Uterus (tissue), 4 donors: ENCODE measurements at regions of chr19 and their contacts with region 1.

Region 1: DNA sequence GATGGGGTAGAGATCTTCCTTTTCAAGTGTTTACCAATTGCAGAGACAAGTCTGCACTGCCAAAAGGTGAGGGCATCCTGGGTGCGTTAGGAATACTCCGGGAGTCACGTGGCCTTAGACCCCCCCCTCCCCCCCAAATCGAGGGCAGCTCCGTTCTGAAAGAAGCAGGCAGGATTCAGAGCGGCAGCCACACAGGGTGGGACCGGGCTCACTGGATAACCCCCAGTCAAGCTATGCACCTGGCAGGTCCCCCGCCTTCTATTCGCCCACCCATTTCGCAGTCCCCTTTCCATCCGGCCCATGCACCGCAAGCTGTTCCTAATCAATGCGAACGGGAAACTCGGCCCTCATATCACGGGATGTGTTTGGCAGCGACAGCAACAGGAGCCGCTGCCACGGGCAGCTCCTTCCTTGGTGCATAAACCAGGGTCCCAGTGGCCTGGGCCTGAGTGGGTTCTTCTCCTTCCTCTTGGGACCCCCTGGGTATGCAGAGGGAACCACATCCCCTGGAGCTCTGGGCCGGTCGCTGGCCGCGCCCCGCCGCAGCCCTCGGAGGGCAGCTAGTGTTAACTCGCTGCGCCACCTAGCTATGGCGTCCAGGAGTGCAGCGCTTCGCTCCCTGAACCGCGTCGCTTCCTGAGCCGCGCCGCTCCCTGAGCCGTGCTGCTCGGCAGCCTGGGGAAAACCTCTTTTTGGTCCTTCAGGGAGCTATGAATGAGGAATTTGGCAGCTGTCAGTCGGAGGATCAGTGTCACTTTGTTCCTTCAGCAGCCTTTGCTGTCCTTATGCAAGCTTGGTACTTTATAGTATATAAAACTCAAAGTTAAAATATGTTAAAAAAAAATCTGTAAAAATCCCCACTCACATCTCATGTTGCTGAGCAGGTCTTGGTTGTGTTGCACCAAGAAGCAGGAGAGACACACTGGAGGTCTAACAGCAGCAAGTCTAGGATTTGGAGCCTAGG is 41.4 kb downstream of the LYL1 start:
- DNase-seq: peak; percentile 83 to 89
- H3K4me3 ChIP-seq: peak overlapping the region; percentile 33 to 35
- H3K27ac ChIP-seq: peak overlapping the region; percentile 98 to 100
- H3K4me1 ChIP-seq: peaks cover 34 to 61% of the 10 kb centered on the region in 2 donors
- H3K27me3 ChIP-seq: no peaks in the 10 kb centered on the region
- CTCF ChIP-seq: peak; percentile 94 to 99 (median 96)
- POLR2A ChIP-seq: peak in 1 of 2 donors; percentile 17

Region 2: DNA sequence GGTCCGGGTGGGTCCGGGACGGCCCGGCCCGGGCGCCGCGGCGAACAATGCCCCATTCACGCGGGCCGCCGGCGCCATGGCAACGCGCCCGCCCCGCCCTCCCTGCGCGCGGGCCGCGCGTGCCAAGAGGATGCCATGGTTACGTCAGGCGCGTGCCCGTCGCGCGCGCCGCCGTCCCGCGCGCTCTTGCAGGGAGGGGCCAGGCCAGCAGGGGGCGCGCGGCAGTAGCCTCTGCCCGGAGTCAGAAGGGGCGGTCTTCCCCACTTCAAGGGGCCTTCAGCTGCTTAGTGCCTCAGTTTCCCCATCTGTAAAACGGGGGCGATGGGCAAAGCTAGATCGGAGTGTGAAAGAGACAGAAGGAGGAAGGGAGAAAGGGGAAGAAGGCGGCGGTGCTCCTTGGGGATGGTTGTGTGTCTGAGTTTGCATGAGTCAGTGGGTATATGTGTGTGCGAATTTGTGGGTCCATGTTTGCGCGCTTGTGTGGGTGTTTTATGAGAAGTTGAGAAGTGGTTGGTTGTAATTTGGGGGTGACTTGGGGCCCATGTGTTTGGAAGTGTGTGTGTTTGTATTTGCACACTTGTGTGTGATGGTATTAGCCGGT is 77.6 kb before region 1 on chr19:
- intact Hi-C with region 1: loop called (anchors 5 kb)
- DNase-seq: peak; percentile 72 to 85
- H3K4me3 ChIP-seq: peak overlapping the region in 1 of 2 donors; percentile 30
- H3K27ac ChIP-seq: peak overlapping the region in 1 of 2 donors; percentile 45
- H3K4me1 ChIP-seq: no peaks in the 10 kb centered on the region
- H3K27me3 ChIP-seq: no peaks in the 10 kb centered on the region
- CTCF ChIP-seq: peak; percentile 90 to 99 (median 99)
- POLR2A ChIP-seq: peak in 1 of 2 donors; percentile 35